ENCODE measurements at regions of chr9 and their contacts with region 1.

Region 1: GRCh38 chr9:35835216-35835632 is 6.2 kb downstream of the TMEM8B start:
- DNase-seq: no peak
- ATAC-seq: no peak
- H3K4me3 ChIP-seq: no peak overlapping the region
- H3K27ac ChIP-seq: no peak overlapping the region
- H3K4me1 ChIP-seq: peaks cover 3 to 41% (median 29%) of the 10 kb centered on the region in 12 donors
- H3K27me3 ChIP-seq: peaks cover 0 to 25% (median 0%) of the 10 kb centered on the region in 9 donors
- CTCF ChIP-seq: peak in 2 of 12 donors; percentile 15 to 23
- POLR2A ChIP-seq: no peak

Region 2: DNA sequence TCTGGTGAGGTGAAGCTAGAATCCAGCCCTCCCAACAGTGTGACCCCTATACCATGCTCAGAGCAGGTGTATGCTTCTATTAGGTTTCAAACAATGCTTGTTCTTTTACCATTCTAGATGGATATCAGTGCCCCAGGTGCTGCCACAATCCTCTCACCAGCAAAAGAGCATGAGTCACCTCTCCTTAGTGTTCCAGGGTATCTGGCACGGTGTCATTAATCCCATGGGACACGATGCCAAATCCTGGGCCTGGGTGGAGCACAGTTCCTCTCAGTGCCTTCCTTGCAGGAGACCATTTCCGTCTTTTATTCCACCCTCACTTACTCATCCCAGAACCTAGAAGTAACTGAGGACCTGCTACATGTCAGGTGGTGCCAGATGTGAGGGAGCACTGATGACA is 36.3 kb after region 1 on chr9:
- intact Hi-C with region 1: loop called in 2 of 10 experiments (anchors 5 kb)
- DNase-seq: no peak
- ATAC-seq: peak in 2 of 4 donors; percentile 27 to 47
- H3K4me3 ChIP-seq: no peak overlapping the region
- H3K27ac ChIP-seq: no peak overlapping the region
- H3K4me1 ChIP-seq: no peaks in the 10 kb centered on the region
- H3K27me3 ChIP-seq: peaks cover 0 to 6% (median 0%) of the 10 kb centered on the region in 9 donors
- CTCF ChIP-seq: no peak
- POLR2A ChIP-seq: no peak